PC-3 (cell line): ENCODE measurements at regions of chr5 and their contacts with region 1.

Region 1: GRCh38 chr5:143403593-143404415 is at the start of gene NR3C1:
- DNase-seq: peak; percentile 78
- ATAC-seq: peak; percentile 55
- H3K4me3 ChIP-seq: peak within 1 kb of the TSS; percentile 92
- H3K27ac ChIP-seq: peak within 1 kb of the TSS; percentile 99
- H3K4me1 ChIP-seq: peaks cover 33% of the 10 kb centered on the region
- H3K27me3 ChIP-seq: no peaks in the 10 kb centered on the region
- CTCF ChIP-seq: peak; percentile 21; the same call in 1 of the 2 replicates
- total RNA-seq, gene NR3C1: 13.0 and 14.5 TPM in 2 replicates

Region 2: DNA sequence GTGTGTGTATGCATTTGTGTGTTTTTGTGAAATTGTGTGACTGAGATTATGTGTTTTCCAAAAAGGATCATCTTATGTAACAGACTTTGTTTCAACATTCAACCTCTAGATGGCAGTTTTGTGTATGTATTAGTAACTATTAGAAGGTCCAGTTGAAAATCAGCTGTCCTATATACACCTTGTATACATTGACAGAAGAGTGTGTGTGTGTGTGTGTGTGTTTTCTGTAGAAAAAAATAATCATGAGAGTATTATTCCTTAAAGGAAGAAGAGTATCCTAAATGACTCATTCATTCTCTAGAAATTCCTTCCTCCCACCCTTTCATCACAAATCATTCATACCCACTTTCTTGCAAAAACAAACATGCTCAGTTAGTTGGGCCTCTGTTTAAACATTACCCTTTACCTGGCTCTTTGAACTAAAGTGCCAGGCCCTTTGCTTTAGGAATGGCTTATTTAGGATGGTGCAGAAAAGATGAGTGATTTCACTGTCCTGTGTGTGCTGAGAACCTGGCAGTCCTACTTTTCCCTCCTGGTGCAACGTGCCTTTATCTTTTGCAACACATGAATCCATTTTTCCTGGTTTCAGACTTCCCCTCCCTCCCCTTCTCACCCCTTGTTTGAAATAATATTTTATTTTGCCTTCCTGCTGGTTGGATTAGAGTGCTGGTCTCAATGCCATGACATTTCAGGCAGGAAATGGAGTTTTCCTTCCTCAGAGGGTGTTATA is 481.4 kb before region 1 on chr5:
- CTCF ChIA-PET with region 1: no interaction called
- POLR2A ChIA-PET with region 1: no interaction called
- intact Hi-C with region 1: loop called (anchors 2 kb)
- DNase-seq: peak; percentile 64
- ATAC-seq: peak; percentile 64
- H3K4me3 ChIP-seq: no peak overlapping the region
- H3K27ac ChIP-seq: peak overlapping the region; percentile 67
- H3K4me1 ChIP-seq: peaks cover 31% of the 10 kb centered on the region
- H3K27me3 ChIP-seq: no peaks in the 10 kb centered on the region
- CTCF ChIP-seq: peak; percentile 58

Region 3: DNA sequence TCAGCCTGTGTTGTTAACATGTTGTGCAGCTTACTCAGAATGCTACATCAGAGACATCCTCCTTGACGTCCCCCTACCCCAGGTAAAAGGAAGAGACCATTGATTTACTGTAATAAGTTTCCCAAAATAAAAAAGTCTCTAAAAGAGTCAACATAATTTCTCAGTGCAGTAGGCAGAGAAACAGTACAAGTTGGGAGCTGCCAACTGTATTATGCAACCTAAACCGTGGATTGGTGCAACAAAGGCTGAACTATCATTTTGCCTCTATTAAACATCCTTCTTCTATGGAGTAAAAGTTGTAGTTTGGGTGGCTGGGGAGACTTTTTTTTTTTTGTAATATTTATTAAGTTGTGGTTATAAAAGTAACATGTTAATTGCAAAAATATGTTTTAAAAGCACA is 208.3 kb before region 1 on chr5:
- CTCF ChIA-PET with region 1: no interaction called
- POLR2A ChIA-PET with region 1: no interaction called
- intact Hi-C with region 1: loop called (anchors 5 kb)
- DNase-seq: no peak
- ATAC-seq: no peak
- H3K4me3 ChIP-seq: no peak overlapping the region
- H3K27ac ChIP-seq: no peak overlapping the region
- H3K4me1 ChIP-seq: no peaks in the 10 kb centered on the region; the same call in 1 of the 2 replicates
- H3K27me3 ChIP-seq: no peaks in the 10 kb centered on the region
- CTCF ChIP-seq: no peak

Region 4: DNA sequence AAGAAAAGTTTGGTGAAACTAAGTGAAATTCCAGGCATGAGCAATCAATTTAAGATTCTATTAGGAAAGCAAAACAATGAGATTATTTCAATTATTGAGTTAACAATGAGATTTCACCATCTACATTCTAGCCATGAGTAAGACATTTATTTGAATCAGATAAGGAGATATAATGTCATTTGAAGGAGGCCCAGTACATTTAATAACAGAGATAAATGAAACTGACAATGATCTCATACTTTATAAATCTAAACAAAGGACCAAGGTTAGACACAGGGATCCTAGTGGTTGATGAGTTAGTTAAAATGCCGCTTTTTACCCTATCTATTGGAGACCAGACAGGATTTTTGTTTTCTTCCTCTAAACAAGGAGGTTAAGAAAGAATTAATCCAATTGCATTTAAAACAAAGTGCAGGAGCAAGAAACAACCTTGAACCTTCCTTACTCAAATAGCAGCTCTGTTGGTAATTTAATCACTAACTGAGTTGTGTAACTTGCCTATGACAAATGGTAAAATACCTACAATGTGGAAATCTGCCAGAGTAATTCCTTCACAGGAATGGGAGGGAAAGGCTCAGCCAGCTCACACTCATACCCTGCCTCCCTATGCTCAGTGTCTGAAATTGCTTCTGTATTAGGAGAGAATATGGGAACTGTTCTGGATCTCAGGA is 103.2 kb after region 1 on chr5:
- CTCF ChIA-PET with region 1: no interaction called
- POLR2A ChIA-PET with region 1: interaction called, 3 read pairs
- intact Hi-C with region 1: loop called (anchors 1 kb)
- DNase-seq: peak; percentile 94
- ATAC-seq: peak; percentile 94
- H3K4me3 ChIP-seq: 0 out of 2 replicates have a peak overlapping the region, but pooled peaks have one; percentile 36
- H3K27ac ChIP-seq: peak overlapping the region; percentile 86
- H3K4me1 ChIP-seq: peaks cover 27% of the 10 kb centered on the region
- H3K27me3 ChIP-seq: no peaks in the 10 kb centered on the region
- CTCF ChIP-seq: peak; percentile 21; the same call in 1 of the 2 replicates

Region 5: DNA sequence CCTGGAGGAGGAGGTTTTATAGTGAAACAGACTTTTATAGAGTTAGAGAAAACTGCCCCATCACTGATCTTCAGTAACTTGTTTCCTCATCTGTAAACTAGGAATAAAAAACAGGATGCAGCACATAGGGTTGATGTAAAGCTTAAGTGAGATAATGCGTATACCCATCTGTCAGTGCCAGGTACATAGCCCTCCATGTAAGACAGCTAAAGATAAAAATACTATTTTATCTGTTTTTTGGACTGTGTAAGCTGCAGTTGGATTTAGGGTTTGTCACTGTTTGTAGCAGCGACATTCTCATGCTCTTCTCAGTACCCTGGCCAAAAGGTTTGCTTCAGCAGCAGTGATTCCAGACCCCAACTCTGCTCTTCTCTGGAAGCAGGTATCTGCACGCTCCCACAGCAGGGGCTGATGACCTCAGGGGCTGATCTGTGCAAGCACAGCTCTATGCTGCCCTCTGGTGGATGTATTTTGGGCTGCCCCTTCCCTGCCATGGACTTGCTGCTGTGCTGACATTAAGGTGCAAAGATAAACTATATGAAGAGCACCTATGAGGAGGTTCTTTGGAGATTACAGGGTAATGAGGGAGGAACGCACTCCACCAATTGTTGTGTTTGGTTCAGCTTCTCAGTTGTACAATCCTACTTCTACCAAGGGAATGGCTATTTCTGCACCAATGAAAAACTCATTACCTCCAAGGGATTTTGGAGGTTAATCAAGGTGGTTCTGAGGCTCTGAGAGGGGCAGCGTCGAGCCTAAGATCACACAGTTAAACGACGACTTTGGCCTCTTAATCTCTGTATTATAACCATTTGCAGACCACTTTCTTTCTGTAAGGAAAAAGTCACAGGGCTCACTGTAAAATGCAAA is 421.3 kb after region 1 on chr5:
- CTCF ChIA-PET with region 1: interaction called, 6 read pairs
- POLR2A ChIA-PET with region 1: no interaction called
- intact Hi-C with region 1: loop called (anchors 1 kb)
- DNase-seq: peak; percentile 83
- ATAC-seq: peak; percentile 68
- H3K4me3 ChIP-seq: no peak overlapping the region
- H3K27ac ChIP-seq: no peak overlapping the region
- H3K4me1 ChIP-seq: peaks cover 18% of the 10 kb centered on the region
- H3K27me3 ChIP-seq: no peaks in the 10 kb centered on the region
- CTCF ChIP-seq: peak; percentile 87

Region 6: DNA sequence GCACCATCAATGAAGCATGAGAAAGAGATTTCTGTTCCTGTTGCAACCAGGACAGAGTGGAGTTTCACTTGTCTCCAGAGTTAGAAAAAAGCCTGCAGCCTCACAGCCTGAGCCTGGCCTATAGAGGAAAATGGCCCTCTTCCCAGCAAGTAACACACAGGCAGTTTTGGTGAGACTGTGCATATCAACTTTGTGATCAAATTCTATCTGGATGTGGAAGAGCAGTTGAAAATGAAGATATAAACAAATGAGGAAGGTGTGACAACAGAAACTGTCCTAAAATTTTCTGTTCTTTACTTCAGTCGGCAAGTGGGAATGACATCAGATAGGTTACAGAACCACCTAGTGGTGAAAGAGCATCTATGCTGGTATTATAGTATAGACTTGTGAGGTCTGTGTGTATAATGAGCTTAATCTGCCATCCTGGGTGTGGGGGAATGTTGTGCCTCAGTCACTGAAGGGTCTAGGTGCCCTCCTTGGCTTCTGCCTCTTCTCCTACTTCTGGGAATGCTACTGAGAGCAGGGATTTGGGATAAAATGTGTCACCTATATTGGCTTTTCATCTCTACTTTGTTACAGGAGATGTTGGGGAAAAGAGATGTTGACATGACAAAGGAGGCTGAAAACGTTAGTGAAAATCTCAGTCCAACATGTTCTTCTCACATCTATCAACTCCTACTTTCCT is 738.5 kb after region 1 on chr5:
- CTCF ChIA-PET with region 1: interaction called, 7 read pairs
- POLR2A ChIA-PET with region 1: no interaction called
- intact Hi-C with region 1: loop called (anchors 1 kb)
- DNase-seq: peak; percentile 55
- ATAC-seq: peak; percentile 91
- H3K4me3 ChIP-seq: no peak overlapping the region
- H3K27ac ChIP-seq: no peak overlapping the region
- H3K4me1 ChIP-seq: peaks cover 7% of the 10 kb centered on the region; the same call in 1 of the 2 replicates
- H3K27me3 ChIP-seq: no peaks in the 10 kb centered on the region
- CTCF ChIP-seq: peak; percentile 81